ENCODE measurements at regions of chr3 and their contacts with region 1.

Region 1: GRCh38 chr3:14508961-14509795 is 31.0 kb downstream of the GRIP2 start:
- DNase-seq: peak; percentile 33 to 59 (median 41)
- H3K4me3 ChIP-seq: no peak overlapping the region
- H3K27ac ChIP-seq: no peak overlapping the region
- H3K4me1 ChIP-seq: no peaks in the 10 kb centered on the region
- H3K27me3 ChIP-seq: no peaks in the 10 kb centered on the region

Region 2: DNA sequence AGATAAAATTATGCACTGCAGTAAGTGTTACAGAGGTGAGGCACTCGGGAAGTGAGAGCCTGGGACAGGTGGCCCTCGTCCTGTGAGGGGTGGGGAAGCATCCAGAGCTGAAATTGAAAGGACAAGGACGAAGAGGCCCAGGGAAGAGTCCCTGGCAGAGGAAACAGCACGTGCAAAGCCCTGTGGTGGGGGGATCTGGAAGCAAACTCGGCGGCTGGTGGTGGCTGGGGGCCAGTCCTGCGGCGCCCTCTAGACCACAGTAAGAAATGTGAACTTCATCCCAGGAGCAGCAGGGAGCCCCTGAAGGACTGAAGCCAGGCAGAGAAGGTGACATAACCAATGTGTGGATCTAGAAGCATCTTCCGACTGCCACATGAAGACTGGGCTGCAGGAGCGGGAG is 11.9 kb before region 1 on chr3:
- CTCF ChIA-PET with region 1: interaction called, 19 read pairs
- POLR2A ChIA-PET with region 1: no interaction called
- DNase-seq: no peak
- H3K4me3 ChIP-seq: no peak overlapping the region
- H3K27ac ChIP-seq: no peak overlapping the region
- H3K4me1 ChIP-seq: no peaks in the 10 kb centered on the region
- H3K27me3 ChIP-seq: peaks cover 0 to 3% (median 0%) of the 10 kb centered on the region in 5 experiments

Region 3: GRCh38 chr3:14548321-14548729 is 39.1 kb after region 1 on chr3:
- CTCF ChIA-PET with region 1: interaction called, 26 read pairs
- POLR2A ChIA-PET with region 1: no interaction called
- DNase-seq: peak; percentile 61 to 75 (median 71)
- H3K4me3 ChIP-seq: no peak overlapping the region
- H3K27ac ChIP-seq: no peak overlapping the region
- H3K4me1 ChIP-seq: peaks cover 0 to under 1% (median 0%) of the 10 kb centered on the region in 4 experiments
- H3K27me3 ChIP-seq: peaks cover 3 to 65% (median 16%) of the 10 kb centered on the region in 5 experiments